ENCODE measurements at regions of chr6 and their contacts with region 1.

Region 1: DNA sequence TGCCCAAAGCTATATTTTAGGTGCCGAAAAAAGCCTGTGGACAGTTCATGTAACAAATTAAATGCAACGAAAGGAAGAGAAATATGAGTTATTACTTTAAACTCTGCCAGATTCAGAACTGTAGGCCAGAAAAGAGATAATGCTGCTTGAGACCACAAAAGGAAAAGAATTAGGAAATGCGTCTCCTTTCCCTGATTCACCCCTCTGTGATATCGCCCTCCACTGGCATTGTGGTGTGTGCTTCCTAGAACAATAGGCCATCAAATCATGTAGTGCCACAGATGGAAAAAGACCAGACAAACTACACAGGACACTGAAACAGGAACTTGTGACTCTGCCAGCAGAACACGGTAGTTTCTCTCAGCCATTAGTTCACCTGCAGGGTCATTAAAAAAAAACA is 14.7 kb upstream of the LAMA4 start:
- DNase-seq: peak in 2 of 3 donors; percentile 28 to 52
- H3K4me3 ChIP-seq: no peak overlapping the region
- H3K27ac ChIP-seq: no peak overlapping the region
- H3K4me1 ChIP-seq: peaks cover 0 to 7% (median 2%) of the 10 kb centered on the region in 4 experiments
- H3K27me3 ChIP-seq: no peaks in the 10 kb centered on the region

Region 2: DNA sequence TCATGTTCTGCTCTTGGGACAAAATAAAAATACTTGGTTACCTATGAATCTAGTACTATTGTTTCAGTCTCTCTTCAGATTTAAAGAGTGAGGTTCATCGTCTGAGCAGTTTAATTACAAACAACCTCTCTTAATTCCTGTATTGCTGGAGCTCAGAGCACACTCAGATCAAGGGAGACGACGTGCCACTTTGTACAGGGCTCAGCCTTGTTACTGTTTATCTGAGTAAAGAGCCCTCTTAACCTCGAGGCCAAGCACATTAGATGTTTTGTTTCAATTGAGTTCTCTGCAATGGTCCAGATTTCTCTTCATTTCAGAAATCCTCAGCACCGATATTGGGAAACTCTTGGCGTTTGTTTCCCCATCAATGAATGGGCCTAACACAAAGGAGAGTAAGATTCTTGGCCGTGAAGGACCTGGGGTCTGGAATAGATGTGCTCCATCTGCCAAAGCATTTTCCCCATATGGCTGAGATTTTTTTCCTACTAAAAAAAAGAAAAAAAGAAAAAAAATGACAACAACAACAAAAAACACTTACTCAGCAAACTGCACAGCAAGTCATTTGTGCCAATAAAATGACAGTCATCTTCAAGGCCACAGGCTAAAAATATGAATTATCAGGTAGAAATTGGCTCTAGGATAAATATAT is 297.8 kb before region 1 on chr6:
- CTCF ChIA-PET with region 1: no interaction called
- POLR2A ChIA-PET with region 1: no interaction called
- DNase-seq: no peak
- H3K4me3 ChIP-seq: no peak overlapping the region
- H3K27ac ChIP-seq: no peak overlapping the region
- H3K4me1 ChIP-seq: no peaks in the 10 kb centered on the region
- H3K27me3 ChIP-seq: no peaks in the 10 kb centered on the region

Region 3: DNA sequence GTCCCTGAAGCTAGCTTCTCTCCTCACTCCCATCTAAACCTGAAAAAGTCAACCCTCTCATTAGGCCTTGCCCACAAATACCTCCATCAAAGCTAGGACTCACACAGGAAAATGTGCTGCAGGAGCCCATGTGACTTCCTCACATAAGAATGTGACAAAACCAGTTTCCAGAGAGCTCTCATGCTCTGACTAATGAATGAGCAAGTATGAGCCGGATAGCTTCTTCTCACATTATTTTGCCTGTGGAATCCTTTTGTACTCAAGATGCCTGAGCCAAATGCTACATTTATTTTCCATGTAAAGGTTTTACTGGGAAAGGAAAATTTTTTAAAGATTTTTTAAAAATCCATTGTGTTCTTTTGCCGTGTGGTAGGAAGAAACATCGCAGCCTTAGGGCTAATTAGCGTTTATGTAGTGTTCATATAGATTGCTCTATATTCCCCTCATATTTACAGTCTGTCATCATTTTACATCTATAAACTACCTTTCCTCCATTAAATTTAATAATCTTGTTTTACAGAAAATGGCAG is 283.8 kb before region 1 on chr6:
- CTCF ChIA-PET with region 1: no interaction called
- POLR2A ChIA-PET with region 1: no interaction called
- DNase-seq: peak in 1 of 3 donors; percentile 17
- H3K4me3 ChIP-seq: no peak overlapping the region
- H3K27ac ChIP-seq: no peak overlapping the region
- H3K4me1 ChIP-seq: no peaks in the 10 kb centered on the region
- H3K27me3 ChIP-seq: no peaks in the 10 kb centered on the region

Region 4: DNA sequence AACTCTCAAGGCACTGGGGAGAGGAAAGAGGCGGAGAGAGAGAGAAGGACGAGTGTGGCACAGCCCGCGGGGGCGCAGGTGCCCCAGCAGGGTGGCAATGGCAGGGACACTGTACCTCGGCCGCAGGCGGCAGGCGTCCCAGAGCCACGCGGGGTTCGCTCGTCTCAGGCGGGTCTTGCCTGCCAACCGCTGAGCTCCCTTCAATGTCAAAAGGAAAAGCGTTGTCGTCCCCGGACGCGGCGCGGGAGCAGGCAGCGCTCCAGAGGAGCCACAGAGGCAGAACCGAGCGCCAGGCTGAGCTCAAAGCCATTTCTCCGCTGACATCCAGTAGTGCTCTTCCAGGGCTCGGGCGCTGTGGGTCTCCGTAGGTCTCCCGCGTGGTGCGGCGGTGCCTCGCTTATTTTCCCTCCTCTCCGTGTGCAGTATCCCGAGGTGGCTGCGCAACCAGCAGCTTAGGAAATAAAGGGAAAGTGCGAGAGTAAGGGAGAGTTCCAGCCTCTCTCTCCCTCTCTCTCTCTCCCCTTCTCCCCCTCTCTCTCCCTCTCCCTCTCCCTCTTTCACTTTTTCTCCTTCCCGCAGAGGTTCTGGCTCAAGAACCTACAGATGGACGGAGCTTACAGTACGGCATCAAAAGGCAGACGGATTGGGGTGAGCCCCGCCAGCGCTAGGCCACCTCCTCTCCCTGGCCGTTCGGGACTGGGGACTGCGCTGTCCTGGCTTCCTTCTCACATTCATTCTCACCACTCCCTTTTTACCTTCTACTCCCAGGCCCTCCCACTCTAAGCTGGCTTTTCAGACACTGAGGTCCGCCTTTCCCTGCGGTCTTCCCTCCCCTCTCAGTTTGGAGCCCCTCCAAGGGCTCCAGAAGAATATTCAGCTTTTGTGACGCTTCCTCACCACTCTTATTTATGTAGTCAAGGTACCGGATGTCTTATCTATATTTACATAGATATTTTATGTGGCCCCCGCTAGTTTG is 15.0 kb before region 1 on chr6 and contains the start of gene LAMA4:
- CTCF ChIA-PET with region 1: interaction called, 11 read pairs
- POLR2A ChIA-PET with region 1: interaction called, 3 read pairs
- DNase-seq: peak; percentile 16 to 56 (median 42)
- H3K4me3 ChIP-seq: peak within 1 kb of the TSS in 6 of 7 experiments; percentile 32 to 76 (median 62)
- H3K27ac ChIP-seq: no peak within 1 kb of the TSS
- H3K4me1 ChIP-seq: peaks cover 0 to 17% (median 14%) of the 10 kb centered on the region in 4 experiments
- H3K27me3 ChIP-seq: peaks cover 0 to 53% (median 24%) of the 10 kb centered on the region in 5 experiments